Endothelial cell of umbilical vein (primary cell): ENCODE measurements at regions of chr10 and their contacts with region 1.

Region 1: GRCh38 chr10:4656576-4657182 is 169.3 kb upstream of the AKR1E2 start:
- DNase-seq: peak; percentile 80
- H3K4me3 ChIP-seq: no peak overlapping the region
- H3K27ac ChIP-seq: peak overlapping the region; percentile 47
- H3K4me1 ChIP-seq: peaks cover 4% of the 10 kb centered on the region
- H3K27me3 ChIP-seq: no peaks in the 10 kb centered on the region
- CTCF ChIP-seq: peak; percentile 77 to 82
- POLR2A ChIP-seq: no peak

Region 2: GRCh38 chr10:3197348-3198003 is 1459.2 kb before region 1 on chr10:
- CTCF ChIA-PET with region 1: interaction called, 11 read pairs
- POLR2A ChIA-PET with region 1: no interaction called
- dilution Hi-C with region 1: no loop called
- intact Hi-C with region 1: loop called (anchors 1 kb)
- DNase-seq: peak; percentile 86
- H3K4me3 ChIP-seq: peak overlapping the region in 2 of 3 experiments; percentile 1 to 6
- H3K27ac ChIP-seq: no peak overlapping the region
- H3K4me1 ChIP-seq: peaks cover 12% of the 10 kb centered on the region
- H3K27me3 ChIP-seq: peaks cover 0 to 6% of the 10 kb centered on the region in 2 experiments
- CTCF ChIP-seq: peak; percentile 93 to 96
- POLR2A ChIP-seq: no peak

Region 3: DNA sequence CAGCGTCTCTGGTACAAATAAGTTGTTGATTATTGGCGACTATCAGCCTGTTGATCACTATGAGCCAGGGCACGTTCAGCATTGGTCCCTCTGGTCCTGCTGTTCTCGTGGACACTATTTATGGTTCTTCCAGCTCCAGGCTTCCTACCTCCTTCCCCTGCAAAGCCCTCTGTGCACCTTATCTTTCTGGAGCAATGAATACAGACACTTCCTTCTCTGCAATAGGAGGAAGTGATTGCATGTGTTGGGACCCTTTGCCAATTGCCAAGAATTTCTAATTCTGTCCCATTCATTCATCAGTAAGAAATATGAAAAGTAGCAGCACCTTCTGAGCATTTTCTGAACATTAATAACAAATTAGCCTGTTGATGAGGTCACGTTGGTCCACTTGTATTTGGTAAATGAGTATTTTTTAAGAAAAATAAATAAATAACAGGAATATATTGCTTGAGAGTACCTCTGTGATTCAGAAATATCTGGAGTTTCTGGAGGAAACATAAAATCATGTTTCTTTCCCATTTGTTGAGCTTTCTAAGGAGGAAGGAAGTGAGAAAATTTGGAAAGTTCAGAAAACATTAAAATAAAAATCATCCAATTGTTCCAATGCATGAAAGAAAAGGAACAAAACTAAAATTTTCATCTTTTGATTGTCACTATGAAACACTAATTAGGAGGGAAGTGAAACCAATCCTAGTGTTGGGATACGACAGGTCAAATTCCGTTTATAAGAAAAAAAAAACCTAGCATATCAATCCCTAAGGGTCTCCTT is 612.6 kb before region 1 on chr10:
- CTCF ChIA-PET with region 1: no interaction called
- POLR2A ChIA-PET with region 1: no interaction called
- dilution Hi-C with region 1: no loop called
- intact Hi-C with region 1: loop called (anchors 1 kb)
- DNase-seq: peak; percentile 97
- H3K4me3 ChIP-seq: no peak overlapping the region
- H3K27ac ChIP-seq: peak overlapping the region; percentile 66
- H3K4me1 ChIP-seq: peaks cover 21% of the 10 kb centered on the region
- H3K27me3 ChIP-seq: no peaks in the 10 kb centered on the region
- CTCF ChIP-seq: no peak
- POLR2A ChIP-seq: peak; percentile 67

Region 4: GRCh38 chr10:4372601-4373000 is 284.1 kb before region 1 on chr10:
- CTCF ChIA-PET with region 1: no interaction called
- POLR2A ChIA-PET with region 1: no interaction called
- dilution Hi-C with region 1: no loop called
- intact Hi-C with region 1: loop called (anchors 5 kb)
- DNase-seq: peak; percentile 93
- H3K4me3 ChIP-seq: no peak overlapping the region
- H3K27ac ChIP-seq: peak overlapping the region; percentile 91
- H3K4me1 ChIP-seq: peaks cover 14% of the 10 kb centered on the region
- H3K27me3 ChIP-seq: no peaks in the 10 kb centered on the region
- CTCF ChIP-seq: no peak
- POLR2A ChIP-seq: no peak

Region 5: DNA sequence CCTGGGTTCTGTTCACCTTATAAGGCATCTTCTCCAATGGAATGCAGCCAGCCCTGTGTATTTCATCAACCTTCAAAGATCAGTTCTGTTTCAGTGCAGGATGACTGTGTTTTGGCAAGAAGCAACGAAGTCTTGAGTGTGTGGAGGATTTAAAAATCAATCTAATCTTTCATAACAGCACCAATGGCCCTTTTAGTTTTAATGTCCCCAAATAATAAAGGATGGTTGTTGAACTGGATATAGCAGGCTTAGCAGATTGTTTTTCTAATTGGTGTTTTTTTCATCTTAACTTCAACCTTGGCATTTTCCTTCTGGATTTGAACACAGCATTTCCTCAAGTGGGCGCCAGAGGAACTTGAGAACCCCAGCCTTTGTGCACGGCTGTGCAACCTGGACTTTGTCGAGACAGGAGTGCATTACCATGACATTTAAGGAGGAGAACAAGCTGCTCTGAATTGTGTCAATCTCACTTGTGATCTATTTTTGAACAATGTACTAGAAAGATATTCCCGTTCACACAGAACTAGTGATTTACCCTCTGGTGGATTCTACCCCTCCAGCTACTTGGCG is 143.9 kb before region 1 on chr10:
- CTCF ChIA-PET with region 1: interaction called, 3 read pairs
- POLR2A ChIA-PET with region 1: no interaction called
- dilution Hi-C with region 1: no loop called
- intact Hi-C with region 1: loop called (anchors 2 kb)
- DNase-seq: peak; percentile 54
- H3K4me3 ChIP-seq: no peak overlapping the region
- H3K27ac ChIP-seq: no peak overlapping the region
- H3K4me1 ChIP-seq: no peaks in the 10 kb centered on the region
- H3K27me3 ChIP-seq: no peaks in the 10 kb centered on the region
- CTCF ChIP-seq: peak; percentile 36 to 43
- POLR2A ChIP-seq: no peak

Region 6: DNA sequence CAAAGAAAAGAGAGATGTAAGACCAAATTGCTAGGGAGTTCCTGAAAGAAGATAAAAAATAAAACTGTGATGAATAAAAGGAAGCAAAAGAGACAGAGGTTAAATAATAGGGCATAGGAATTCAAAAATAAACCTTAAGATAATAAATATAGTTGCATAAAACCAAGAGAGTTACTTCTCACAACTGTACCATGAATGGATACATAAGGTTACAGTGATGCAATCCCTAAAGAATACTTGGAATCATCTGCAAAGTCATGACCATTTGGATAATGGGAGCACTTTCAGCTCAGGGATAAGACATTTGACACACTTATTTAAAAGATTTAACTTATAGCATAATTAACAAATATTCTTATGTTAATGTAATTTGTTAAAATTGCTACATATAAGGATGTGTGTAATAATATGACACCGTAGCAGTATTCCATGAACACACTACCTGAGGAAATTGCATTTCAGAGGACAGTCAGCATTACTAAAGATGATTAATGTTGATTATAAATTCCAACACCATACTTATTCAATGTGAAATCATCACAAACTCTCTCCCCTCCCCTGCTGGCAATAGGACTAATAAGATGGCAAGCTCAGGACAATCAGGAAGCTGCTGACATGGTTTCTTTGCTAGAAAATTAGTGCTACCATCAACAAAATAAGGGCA is 32.8 kb before region 1 on chr10:
- CTCF ChIA-PET with region 1: no interaction called
- POLR2A ChIA-PET with region 1: no interaction called
- dilution Hi-C with region 1: no loop called
- intact Hi-C with region 1: no loop called
- DNase-seq: no peak
- H3K4me3 ChIP-seq: no peak overlapping the region
- H3K27ac ChIP-seq: no peak overlapping the region
- H3K4me1 ChIP-seq: no peaks in the 10 kb centered on the region
- H3K27me3 ChIP-seq: no peaks in the 10 kb centered on the region
- CTCF ChIP-seq: no peak
- POLR2A ChIP-seq: no peak

Region 7: GRCh38 chr10:4740471-4740870 is 83.8 kb after region 1 on chr10:
- CTCF ChIA-PET with region 1: no interaction called
- POLR2A ChIA-PET with region 1: no interaction called
- dilution Hi-C with region 1: no loop called
- intact Hi-C with region 1: no loop called
- DNase-seq: no peak
- H3K4me3 ChIP-seq: no peak overlapping the region
- H3K27ac ChIP-seq: no peak overlapping the region
- H3K4me1 ChIP-seq: no peaks in the 10 kb centered on the region
- H3K27me3 ChIP-seq: no peaks in the 10 kb centered on the region
- CTCF ChIP-seq: no peak
- POLR2A ChIP-seq: no peak